ENCODE measurements at regions of chr2 and their contacts with region 1.

Region 1: DNA sequence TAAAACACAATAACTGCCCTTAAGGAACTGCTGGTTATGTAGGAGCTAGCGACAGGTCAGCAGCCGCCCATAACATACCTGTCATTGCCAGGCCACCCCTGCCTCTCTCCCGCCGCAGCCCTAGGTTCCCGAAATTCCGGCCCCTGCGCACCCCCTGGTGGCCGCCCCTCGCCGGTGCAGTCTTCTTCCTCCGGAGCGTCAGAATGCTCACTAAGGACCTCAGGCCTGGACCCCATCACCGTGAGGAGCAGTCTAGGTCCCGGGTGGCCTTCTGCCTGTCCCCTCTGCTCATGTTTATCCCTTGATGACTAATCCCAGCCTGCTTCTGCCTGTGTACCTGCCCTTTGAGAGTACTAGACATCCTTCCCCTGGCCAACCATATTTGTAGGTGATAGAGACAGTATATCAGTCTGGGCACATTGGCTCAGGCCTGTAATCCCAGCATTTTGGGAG is 115.7 kb upstream of the SLC1A4 start:
- DNase-seq: peak; percentile 74
- H3K4me3 Mint-ChIP-seq: no peak overlapping the region
- H3K27ac Mint-ChIP-seq: no peak overlapping the region
- H3K4me1 Mint-ChIP-seq: peaks cover 15% of the 10 kb centered on the region
- H3K27me3 Mint-ChIP-seq: no peaks in the 10 kb centered on the region
- CTCF ChIP-seq: peak; percentile 93

Region 2: DNA sequence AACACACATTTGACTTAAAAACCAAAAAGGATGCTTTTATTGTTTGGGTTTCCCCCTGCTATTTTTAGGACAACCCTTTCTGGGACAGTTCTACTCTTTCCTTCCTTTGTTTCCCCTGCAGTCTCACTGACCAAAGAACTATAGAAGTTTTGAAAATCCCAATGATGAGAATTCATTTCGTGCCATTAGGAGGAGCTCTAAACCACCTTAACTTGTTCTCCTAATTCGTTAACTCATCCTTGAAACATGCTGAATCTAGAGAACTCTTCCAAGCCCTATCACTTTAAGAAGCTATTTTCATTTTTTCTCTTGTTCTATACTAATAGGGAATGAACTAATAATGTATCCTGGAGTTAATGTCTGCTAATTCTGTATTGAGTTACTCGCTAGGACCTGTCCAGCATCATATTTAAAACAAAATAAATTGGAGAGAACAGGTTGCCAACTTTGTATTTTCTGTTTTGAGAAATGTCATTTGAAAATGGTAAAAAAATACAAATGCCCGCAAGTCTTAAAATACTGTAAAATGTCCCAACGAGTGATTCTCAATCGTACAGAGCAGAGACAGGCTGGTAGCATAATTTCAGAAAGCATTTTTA is 286.5 kb before region 1 on chr2:
- CTCF ChIA-PET with region 1: interaction called, 30 read pairs
- POLR2A ChIA-PET with region 1: interaction called, 5 read pairs
- intact Hi-C with region 1: loop called (anchors 1 kb)
- DNase-seq: peak; percentile 59
- H3K4me3 Mint-ChIP-seq: no peak overlapping the region
- H3K27ac Mint-ChIP-seq: peak overlapping the region; percentile 57
- H3K4me1 Mint-ChIP-seq: no peaks in the 10 kb centered on the region
- H3K27me3 Mint-ChIP-seq: no peaks in the 10 kb centered on the region
- CTCF ChIP-seq: peak; percentile 67

Region 3: GRCh38 chr2:64595397-64596160 is 277.9 kb before region 1 on chr2:
- CTCF ChIA-PET with region 1: interaction called, 7 read pairs
- POLR2A ChIA-PET with region 1: no interaction called
- intact Hi-C with region 1: loop called (anchors 2 kb)
- DNase-seq: peak; percentile 50
- H3K4me3 Mint-ChIP-seq: no peak overlapping the region
- H3K27ac Mint-ChIP-seq: peak overlapping the region; percentile 96
- H3K4me1 Mint-ChIP-seq: peaks cover 36% of the 10 kb centered on the region
- H3K27me3 Mint-ChIP-seq: no peaks in the 10 kb centered on the region
- CTCF ChIP-seq: no peak

Region 4: GRCh38 chr2:64888591-64889309 is 15.3 kb after region 1 on chr2:
- CTCF ChIA-PET with region 1: interaction called, 12 read pairs
- POLR2A ChIA-PET with region 1: no interaction called
- intact Hi-C with region 1: no loop called
- DNase-seq: peak; percentile 88
- H3K4me3 Mint-ChIP-seq: no peak overlapping the region
- H3K27ac Mint-ChIP-seq: no peak overlapping the region
- H3K4me1 Mint-ChIP-seq: no peaks in the 10 kb centered on the region
- H3K27me3 Mint-ChIP-seq: peaks cover 25% of the 10 kb centered on the region
- CTCF ChIP-seq: peak; percentile 55

Region 5: GRCh38 chr2:64963719-64964118 is 90.2 kb after region 1 on chr2:
- CTCF ChIA-PET with region 1: no interaction called
- POLR2A ChIA-PET with region 1: no interaction called
- intact Hi-C with region 1: no loop called
- DNase-seq: no peak
- H3K4me3 Mint-ChIP-seq: no peak overlapping the region
- H3K27ac Mint-ChIP-seq: no peak overlapping the region
- H3K4me1 Mint-ChIP-seq: no peaks in the 10 kb centered on the region
- H3K27me3 Mint-ChIP-seq: no peaks in the 10 kb centered on the region
- CTCF ChIP-seq: no peak

Region 6: GRCh38 chr2:64998658-64999061 is 125.2 kb after region 1 on chr2:
- CTCF ChIA-PET with region 1: no interaction called
- POLR2A ChIA-PET with region 1: no interaction called
- intact Hi-C with region 1: no loop called
- DNase-seq: no peak
- H3K4me3 Mint-ChIP-seq: no peak overlapping the region
- H3K27ac Mint-ChIP-seq: no peak overlapping the region
- H3K4me1 Mint-ChIP-seq: no peaks in the 10 kb centered on the region
- H3K27me3 Mint-ChIP-seq: no peaks in the 10 kb centered on the region
- CTCF ChIP-seq: no peak

Region 7: GRCh38 chr2:65153514-65153913 is 280.0 kb after region 1 on chr2:
- CTCF ChIA-PET with region 1: no interaction called
- POLR2A ChIA-PET with region 1: no interaction called
- intact Hi-C with region 1: no loop called
- DNase-seq: peak; percentile 20
- H3K4me3 Mint-ChIP-seq: no peak overlapping the region
- H3K27ac Mint-ChIP-seq: no peak overlapping the region
- H3K4me1 Mint-ChIP-seq: no peaks in the 10 kb centered on the region
- H3K27me3 Mint-ChIP-seq: no peaks in the 10 kb centered on the region
- CTCF ChIP-seq: no peak